ENCODE measurements at regions of chr7 and their contacts with region 1.

Region 1: GRCh38 chr7:139340037-139340807 is 915 bp upstream of the FMC1 start:
- DNase-seq: peak; percentile 94
- ATAC-seq: peak; percentile 70
- H3K4me3 Mint-ChIP-seq: peak overlapping the region; percentile 92
- H3K27ac Mint-ChIP-seq: peak overlapping the region; percentile 99
- H3K4me1 Mint-ChIP-seq: peaks cover 7% of the 10 kb centered on the region
- H3K27me3 Mint-ChIP-seq: peaks cover 9% of the 10 kb centered on the region
- CTCF ChIP-seq: peak; percentile 34; the same call in 1 of the 2 replicates

Region 2: GRCh38 chr7:139321071-139321745 is 19.0 kb before region 1 on chr7:
- CTCF ChIA-PET with region 1: interaction called, 20 read pairs
- POLR2A ChIA-PET with region 1: no interaction called
- DNase-seq: peak; percentile 18
- ATAC-seq: peak; percentile 77
- H3K4me3 Mint-ChIP-seq: no peak overlapping the region
- H3K27ac Mint-ChIP-seq: peak overlapping the region; percentile 63; the same call in 1 of the 2 replicates
- H3K4me1 Mint-ChIP-seq: peaks cover 8% of the 10 kb centered on the region
- H3K27me3 Mint-ChIP-seq: no peaks in the 10 kb centered on the region
- CTCF ChIP-seq: no peak

Region 3: GRCh38 chr7:139359366-139360209 is 19.4 kb after region 1 on chr7 and contains the start of gene LUC7L2:
- CTCF ChIA-PET with region 1: interaction called, 4 read pairs
- POLR2A ChIA-PET with region 1: interaction called, 12 read pairs
- DNase-seq: peak; percentile 100
- ATAC-seq: peak; percentile 76
- H3K4me3 Mint-ChIP-seq: peak within 1 kb of the TSS; percentile 81
- H3K27ac Mint-ChIP-seq: peak within 1 kb of the TSS; percentile 97
- H3K4me1 Mint-ChIP-seq: peaks cover 31% of the 10 kb centered on the region
- H3K27me3 Mint-ChIP-seq: no peaks in the 10 kb centered on the region
- CTCF ChIP-seq: no peak
- total RNA-seq, gene LUC7L2: 91.0 to 94.4 TPM (median 92.4 TPM) in 3 replicates

Measured in WTC11 (cell line).